GM10248 (cell line): ENCODE measurements at regions of chr2 and their contacts with region 1.

Region 1: GRCh38 chr2:191811807-191812602 is 34.9 kb downstream of the CAVIN2 start:
- DNase-seq: peak; percentile 28
- CTCF ChIP-seq: peak; percentile 68

Region 2: DNA sequence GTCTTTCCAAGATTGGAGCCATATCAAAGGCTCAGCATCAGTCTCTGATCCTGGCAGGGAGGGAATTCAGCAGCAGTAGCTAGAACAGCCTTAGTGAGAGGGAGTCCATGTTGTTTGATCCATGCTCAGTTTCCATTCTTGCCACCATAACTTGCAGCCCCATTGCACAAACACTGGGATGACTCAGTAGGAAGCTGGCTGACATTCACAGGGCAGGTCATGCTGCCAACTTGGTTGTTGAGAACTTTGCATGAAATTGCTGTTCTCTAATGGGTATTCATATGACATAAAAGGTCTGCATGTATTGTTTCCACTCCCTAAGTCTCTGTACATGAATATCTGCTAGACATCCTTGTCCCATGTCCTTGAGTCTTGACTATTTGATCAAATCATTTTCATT is 631.3 kb before region 1 on chr2:
- CTCF ChIA-PET with region 1: no interaction called
- POLR2A ChIA-PET with region 1: no interaction called
- DNase-seq: no peak
- CTCF ChIP-seq: no peak

Region 3: GRCh38 chr2:191555092-191555742 is 256.8 kb before region 1 on chr2:
- CTCF ChIA-PET with region 1: interaction called, 13 read pairs
- POLR2A ChIA-PET with region 1: no interaction called
- DNase-seq: peak; percentile 77
- CTCF ChIP-seq: peak; percentile 78

Region 4: GRCh38 chr2:191800874-191801273 is 11.1 kb before region 1 on chr2:
- CTCF ChIA-PET with region 1: interaction called, 24 read pairs
- POLR2A ChIA-PET with region 1: no interaction called
- DNase-seq: no peak
- CTCF ChIP-seq: no peak

Region 5: GRCh38 chr2:191831410-191831994 is 19.5 kb after region 1 on chr2:
- CTCF ChIA-PET with region 1: interaction called, 10 read pairs
- POLR2A ChIA-PET with region 1: no interaction called
- DNase-seq: no peak
- CTCF ChIP-seq: no peak

Region 6: DNA sequence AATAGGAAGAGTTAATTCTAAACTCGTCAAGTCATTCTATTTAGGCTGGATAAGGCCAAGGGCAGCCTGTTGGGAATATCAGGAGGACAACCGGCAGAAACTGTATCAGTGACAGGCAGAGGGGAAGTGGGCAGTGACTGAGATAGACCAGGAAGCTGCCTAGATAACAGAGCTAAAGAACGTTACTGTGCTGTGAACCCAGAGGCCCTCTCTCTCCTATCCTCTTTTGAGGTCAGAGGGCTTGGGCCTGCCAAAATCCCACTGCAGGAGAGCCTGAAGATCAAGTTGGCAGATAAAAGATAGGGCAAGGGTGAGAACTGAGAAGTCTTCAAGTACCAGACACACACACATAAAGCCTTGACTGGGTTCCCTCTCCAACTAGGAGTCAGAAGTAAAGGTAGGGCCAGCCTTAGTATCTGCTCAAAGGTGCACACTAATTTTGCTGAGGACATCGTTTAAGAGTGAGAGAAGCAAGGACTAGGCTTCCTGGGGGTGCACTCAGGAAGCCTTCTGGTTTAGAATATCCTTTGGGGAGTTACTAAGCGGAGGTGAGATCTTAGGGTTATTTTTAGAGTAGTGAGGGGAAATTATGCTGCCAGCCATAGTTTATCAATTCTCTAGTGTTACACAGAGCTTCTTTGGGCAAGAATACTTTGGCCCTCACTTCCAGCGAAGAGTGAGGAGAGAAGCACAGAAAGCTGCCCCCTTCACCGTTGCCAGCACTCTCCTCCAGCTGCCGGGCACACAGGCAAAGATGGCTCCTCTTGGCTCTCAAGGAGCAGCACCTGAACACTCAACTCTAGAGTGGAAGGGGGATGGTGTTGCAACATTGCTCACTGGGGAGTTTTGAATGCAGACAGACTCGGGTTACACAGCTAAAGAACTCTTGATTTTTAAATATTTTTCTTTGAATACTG is 25.1 kb after region 1 on chr2:
- CTCF ChIA-PET with region 1: interaction called, 11 read pairs
- POLR2A ChIA-PET with region 1: no interaction called
- DNase-seq: no peak
- CTCF ChIP-seq: no peak

Region 7: DNA sequence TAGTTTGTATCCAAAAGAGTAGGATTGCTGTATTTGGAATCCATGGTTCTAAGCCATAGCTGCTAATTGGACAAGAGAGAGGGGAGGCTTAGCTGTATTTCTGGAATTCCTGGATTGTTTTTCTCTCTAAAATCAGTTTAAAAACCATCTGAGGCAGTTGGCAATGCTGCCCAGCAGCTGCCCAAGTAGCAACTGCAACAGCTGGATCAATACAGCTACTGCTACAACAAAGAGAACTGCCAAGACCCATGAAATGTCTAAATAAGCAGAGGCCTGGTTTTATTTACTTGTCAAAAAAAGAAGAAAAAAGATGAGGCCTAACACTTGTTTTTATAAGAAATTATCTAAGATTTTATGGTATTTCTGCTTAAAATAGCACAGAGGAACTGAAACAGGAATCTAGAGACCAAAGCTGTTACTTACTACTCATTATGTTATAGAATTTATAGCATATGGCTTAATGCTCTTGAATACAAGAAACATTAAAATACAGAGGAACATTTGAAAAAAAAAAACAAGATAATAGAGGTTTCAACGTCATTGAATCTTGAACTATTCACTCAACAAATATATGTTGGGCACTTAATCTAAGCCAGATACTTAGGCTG is 343.6 kb after region 1 on chr2:
- CTCF ChIA-PET with region 1: interaction called, 145 read pairs
- POLR2A ChIA-PET with region 1: no interaction called
- DNase-seq: no peak
- CTCF ChIP-seq: no peak

Region 8: GRCh38 chr2:192669505-192670091 is 857.6 kb after region 1 on chr2:
- CTCF ChIA-PET with region 1: no interaction called
- POLR2A ChIA-PET with region 1: no interaction called
- DNase-seq: no peak
- CTCF ChIP-seq: no peak